Posterior vena cava (tissue), 2 donors: ENCODE measurements at regions of chr2 and their contacts with region 1.

Region 1: GRCh38 chr2:28707592-28707991 is 44.0 kb upstream of the PPP1CB start:
- DNase-seq: no peak

Region 2: GRCh38 chr2:28673338-28673737 is 34.3 kb before region 1 on chr2:
- intact Hi-C with region 1: loop called in 1 of 2 experiments (anchors 2 kb)
- DNase-seq: no peak